Heart right ventricle (tissue), 16 donors: ENCODE measurements at regions of chr16 and their contacts with region 1.

Region 1: DNA sequence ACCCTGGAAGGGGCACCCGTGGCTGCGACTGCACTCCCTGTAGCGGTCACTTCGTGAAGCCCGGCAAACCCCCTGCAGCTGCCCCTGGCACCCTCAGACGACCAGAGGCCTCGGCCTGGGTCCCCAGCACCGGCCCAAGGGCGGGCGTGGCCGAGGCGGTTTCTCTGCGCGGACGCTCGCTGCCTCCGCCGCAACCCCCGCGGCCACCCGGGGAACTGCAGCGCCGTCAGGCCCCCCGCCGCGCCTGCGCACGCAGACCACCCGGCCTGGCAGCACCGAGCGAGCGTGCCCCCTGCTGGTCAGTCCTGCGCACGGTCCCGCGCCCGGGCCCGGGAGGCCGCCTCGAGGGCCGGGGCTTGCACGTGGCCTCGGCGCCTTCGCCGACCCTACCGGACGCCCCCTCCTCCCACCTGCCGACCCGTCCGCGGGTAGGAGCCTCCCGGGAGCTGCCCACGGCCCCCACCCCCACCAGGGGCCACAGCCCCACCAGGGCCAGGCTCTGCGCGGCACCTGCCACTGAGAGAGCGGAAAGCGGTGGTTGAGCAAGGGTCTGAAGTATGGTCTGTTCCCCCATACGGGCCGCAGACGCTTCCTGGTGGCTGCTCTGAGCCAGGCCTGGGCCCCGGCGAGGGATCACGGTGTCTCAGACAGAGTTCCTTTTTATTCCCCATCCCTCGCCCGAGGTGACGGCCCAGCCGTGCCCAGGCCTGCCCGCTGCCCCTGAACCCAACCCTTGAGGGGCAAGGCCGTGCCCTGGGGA is 11.5 kb upstream of the HS3ST6 start:
- DNase-seq: peak; percentile 88 to 93
- ATAC-seq: peak; percentile 89 to 97 (median 92)
- H3K4me3 ChIP-seq: peak overlapping the region; percentile 18 to 79 (median 64)
- H3K27ac ChIP-seq: peak overlapping the region in 9 of 10 donors; percentile 31 to 90 (median 82)
- H3K4me1 ChIP-seq: peaks cover 0 to 16% (median 10%) of the 10 kb centered on the region in 9 donors
- H3K27me3 ChIP-seq: peaks cover 0 to 9% (median under 1%) of the 10 kb centered on the region in 7 donors
- CTCF ChIP-seq: peak; percentile 88 to 100 (median 99)

Region 2: GRCh38 chr16:391885-392335 is 1537.8 kb before region 1 on chr16:
- intact Hi-C with region 1: no loop called
- DNase-seq: no peak
- ATAC-seq: peak in 7 of 8 donors; percentile 20 to 69 (median 50)
- H3K4me3 ChIP-seq: no peak overlapping the region
- H3K27ac ChIP-seq: no peak overlapping the region
- H3K4me1 ChIP-seq: peaks cover 0 to 26% (median 18%) of the 10 kb centered on the region in 9 donors
- H3K27me3 ChIP-seq: no peaks in the 10 kb centered on the region
- CTCF ChIP-seq: peak; percentile 36 to 72 (median 66)

Region 3: DNA sequence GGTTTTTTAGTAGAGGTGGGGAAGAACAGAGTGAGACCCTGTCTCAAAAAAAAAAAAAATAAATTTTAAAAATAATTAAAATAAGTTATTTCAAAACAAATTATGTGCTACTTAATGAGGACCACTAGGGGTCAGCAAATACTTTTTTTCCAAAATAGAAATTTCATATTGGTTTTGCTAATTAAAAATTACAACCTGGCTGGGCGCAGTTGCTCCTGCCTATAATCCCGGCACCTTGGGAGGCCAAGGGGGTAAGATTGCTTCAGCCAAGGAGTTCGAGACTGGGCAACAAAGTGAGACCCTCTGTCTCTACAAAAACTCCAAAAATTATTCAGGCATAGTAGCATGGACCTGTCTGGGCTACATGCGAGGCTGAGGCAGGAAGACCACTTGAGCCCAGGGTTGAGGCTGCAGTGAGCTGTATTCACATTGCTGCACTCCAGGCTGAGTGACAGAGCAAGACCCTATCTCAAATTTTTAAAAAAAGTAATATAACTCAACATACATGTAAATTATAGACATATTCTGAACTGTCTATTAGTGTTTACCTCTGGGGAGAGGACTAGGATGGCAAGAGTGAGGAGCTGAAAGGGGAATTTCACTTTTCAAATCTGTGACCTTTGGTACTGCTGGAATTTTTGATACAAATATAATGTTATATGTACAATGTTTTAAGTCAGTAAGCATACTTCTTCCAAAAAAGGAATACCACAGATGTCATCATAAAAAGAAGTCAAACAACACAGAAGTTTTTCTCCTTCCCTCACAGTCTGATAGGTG is 65.9 kb before region 1 on chr16:
- intact Hi-C with region 1: loop called (anchors 1 to 5 kb)
- DNase-seq: no peak
- ATAC-seq: no peak
- H3K4me3 ChIP-seq: no peak overlapping the region
- H3K27ac ChIP-seq: no peak overlapping the region
- H3K4me1 ChIP-seq: peaks cover 0 to 3% (median 0%) of the 10 kb centered on the region in 9 donors
- H3K27me3 ChIP-seq: peaks cover 0 to 94% (median 35%) of the 10 kb centered on the region in 7 donors
- CTCF ChIP-seq: peak; percentile 53 to 74 (median 67)

Region 4: DNA sequence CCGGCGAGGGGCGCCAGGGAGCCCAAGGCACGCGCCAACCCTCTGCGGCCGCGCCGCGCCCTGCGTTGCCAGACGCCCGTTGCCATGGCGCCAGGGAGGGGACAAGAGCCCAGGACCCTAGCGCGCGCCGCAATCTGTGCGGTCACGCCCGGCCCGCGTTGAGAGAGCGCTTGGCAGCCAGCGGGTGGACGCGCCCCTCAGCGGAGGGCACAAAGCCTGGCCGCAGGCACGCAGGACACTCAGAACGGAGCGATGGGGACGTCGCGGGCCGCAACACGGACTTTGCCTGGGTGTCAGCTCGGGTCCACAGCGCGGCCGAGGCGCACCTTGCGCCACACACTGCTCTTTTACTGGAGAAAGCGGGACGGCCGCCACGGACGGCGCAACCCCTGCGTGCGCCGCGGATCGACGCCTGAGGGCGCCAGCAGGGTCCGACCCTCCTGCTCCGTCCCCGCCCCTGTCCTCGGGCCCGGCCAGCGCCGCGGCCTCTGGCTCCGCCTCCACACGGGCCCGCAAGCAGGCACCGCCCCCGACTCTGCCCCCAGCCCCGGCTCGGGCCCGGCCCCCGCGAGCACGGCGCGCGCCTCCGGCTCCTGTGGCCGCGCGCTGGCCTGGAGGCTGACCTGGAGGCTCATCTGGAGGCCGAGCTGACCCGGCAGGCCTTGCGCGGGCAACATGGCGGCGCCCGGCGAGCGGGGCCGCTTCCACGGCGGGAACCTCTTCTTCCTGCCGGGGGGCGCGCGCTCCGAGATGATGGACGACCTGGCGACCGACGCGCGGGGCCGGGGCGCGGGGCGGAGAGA is 54.0 kb after region 1 on chr16 and contains the start of gene GFER:
- intact Hi-C with region 1: loop called in 1 of 10 experiments (anchors 10 kb)
- DNase-seq: peak; percentile 88 to 92
- ATAC-seq: peak; percentile 94 to 98 (median 94)
- H3K4me3 ChIP-seq: peak within 1 kb of the TSS; percentile 80 to 98 (median 91)
- H3K27ac ChIP-seq: peak within 1 kb of the TSS; percentile 65 to 89 (median 81)
- H3K4me1 ChIP-seq: peaks cover 11 to 43% (median 30%) of the 10 kb centered on the region in 9 donors
- H3K27me3 ChIP-seq: peaks cover 15 to 54% (median 43%) of the 10 kb centered on the region in 7 donors
- CTCF ChIP-seq: peak; percentile 9 to 73 (median 52)
- total RNA-seq, gene GFER: 14.7 to 30.2 (median 24.5) TPM